ENCODE measurements at regions of chr12 and their contacts with region 1.

Region 1: DNA sequence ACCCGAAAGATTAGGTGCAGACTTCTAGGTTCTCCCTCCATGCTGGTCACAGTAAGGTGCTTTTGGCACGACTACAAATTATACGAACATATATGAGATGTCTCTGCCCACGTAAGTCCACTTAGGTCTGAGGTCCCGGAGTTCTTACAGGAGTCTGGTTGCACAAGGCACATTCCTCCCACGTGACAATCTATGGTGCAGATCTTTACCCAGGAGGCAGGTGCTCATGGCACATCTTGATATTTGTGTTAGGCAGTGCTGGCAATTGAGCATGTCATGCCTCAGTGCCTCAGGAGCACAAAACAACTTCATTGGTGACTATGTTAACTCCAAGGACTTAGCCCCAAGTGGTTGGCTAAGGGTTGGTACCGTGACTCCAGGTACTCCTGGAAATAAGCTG is 92.0 kb upstream of the AMN1 start:
- DNase-seq: no peak
- ATAC-seq: no peak
- H3K4me3 ChIP-seq: no peak overlapping the region
- H3K4me3 Mint-ChIP-seq: peak overlapping the region in 1 of 10 donors; percentile 2
- H3K27ac ChIP-seq: no peak overlapping the region
- H3K27ac Mint-ChIP-seq: peak overlapping the region in 1 of 9 donors; percentile 19
- H3K4me1 ChIP-seq: no peaks in the 10 kb centered on the region
- H3K4me1 Mint-ChIP-seq: peaks cover 2 to 53% (median 23%) of the 10 kb centered on the region in 7 donors
- H3K27me3 ChIP-seq: no peaks in the 10 kb centered on the region
- H3K27me3 Mint-ChIP-seq: no peaks in the 10 kb centered on the region

Region 2: GRCh38 chr12:31804185-31804504 is 16.7 kb before region 1 on chr12:
- CTCF ChIA-PET with region 1: interaction called, 3 read pairs
- POLR2A ChIA-PET with region 1: interaction called, 4 read pairs
- intact Hi-C with region 1: loop called in 1 of 2 experiments (anchors 2 kb)
- DNase-seq: no peak
- ATAC-seq: no peak
- H3K4me3 ChIP-seq: peak overlapping the region; percentile 32
- H3K4me3 Mint-ChIP-seq: peak overlapping the region; percentile 33 to 91 (median 82)
- H3K27ac ChIP-seq: no peak overlapping the region
- H3K27ac Mint-ChIP-seq: peak overlapping the region; percentile 58 to 95 (median 88)
- H3K4me1 ChIP-seq: peaks cover 0 to 41% of the 10 kb centered on the region in 2 donors
- H3K4me1 Mint-ChIP-seq: peaks cover 26 to 67% (median 61%) of the 10 kb centered on the region in 7 donors
- H3K27me3 ChIP-seq: no peaks in the 10 kb centered on the region
- H3K27me3 Mint-ChIP-seq: no peaks in the 10 kb centered on the region

Region 3: DNA sequence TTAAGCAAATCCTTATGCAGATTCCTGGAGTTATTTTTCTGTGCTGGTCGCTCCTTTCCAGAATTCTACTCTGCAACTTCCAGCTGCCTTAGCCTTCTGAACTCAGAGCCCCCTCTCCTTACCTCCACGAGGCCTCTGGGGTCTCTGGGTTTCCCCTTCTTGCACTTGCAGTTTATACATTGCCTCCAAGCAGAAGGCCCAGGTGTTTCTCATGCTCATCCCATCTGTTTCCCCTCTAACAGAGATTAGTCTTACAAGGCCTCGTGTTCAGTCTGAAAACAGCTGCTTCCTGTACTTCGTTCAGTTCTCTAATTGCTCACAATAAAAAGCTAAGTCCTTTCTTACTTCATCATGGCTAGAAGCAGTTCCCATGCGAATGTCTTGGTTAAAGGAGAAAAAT is 444.1 kb after region 1 on chr12:
- CTCF ChIA-PET with region 1: no interaction called
- POLR2A ChIA-PET with region 1: no interaction called
- intact Hi-C with region 1: no loop called
- DNase-seq: no peak
- ATAC-seq: peak; percentile 41
- H3K4me3 ChIP-seq: no peak overlapping the region
- H3K4me3 Mint-ChIP-seq: no peak overlapping the region
- H3K27ac ChIP-seq: no peak overlapping the region
- H3K27ac Mint-ChIP-seq: no peak overlapping the region
- H3K4me1 ChIP-seq: no peaks in the 10 kb centered on the region
- H3K4me1 Mint-ChIP-seq: peaks cover 3 to 18% (median 12%) of the 10 kb centered on the region in 7 donors
- H3K27me3 ChIP-seq: no peaks in the 10 kb centered on the region
- H3K27me3 Mint-ChIP-seq: no peaks in the 10 kb centered on the region